ENCODE measurements at regions of chr13 and their contacts with region 1.

Region 1: DNA sequence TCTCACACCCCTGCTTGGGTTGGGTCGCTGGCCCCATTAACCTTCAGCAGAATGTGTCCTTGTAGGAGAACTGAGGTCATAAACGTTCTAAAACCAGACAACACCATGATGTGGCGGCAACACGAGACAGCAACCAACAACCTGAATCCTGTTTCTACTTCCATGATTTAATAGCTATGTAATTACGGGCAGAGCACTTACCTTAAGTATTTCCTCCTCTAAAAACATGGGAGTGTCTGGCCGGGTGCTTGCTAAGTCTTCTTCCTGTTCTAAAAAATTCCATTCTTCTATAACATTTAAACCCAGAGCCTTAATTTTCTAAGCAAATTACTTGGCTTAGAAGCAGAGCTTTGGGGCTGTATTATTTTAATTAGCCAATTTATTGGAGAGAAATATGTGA is 33.5 kb upstream of the IRS2 start:
- DNase-seq: no peak
- ATAC-seq: peak; percentile 27
- H3K4me3 ChIP-seq: no peak overlapping the region
- H3K4me1 ChIP-seq: no peaks in the 10 kb centered on the region
- CTCF ChIP-seq: no peak

Region 2: DNA sequence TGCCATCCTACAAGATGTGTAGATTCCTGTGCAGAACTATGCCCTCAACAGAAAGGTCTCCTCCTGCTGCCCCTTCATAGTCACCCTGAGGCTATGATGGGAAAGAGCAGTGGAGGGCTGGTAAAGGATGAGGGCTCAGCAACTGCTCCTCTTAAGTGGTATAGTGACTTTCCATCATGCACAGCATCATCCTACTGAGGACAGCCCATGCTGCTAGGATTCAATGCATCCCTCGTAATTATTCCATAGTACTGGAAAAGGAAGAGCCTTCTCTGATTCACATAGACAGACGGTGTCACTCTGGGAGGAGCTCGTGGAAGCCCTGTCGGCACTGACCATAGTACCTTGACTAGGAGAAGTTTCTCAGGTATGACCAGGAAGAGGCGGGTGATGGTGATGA is 14.1 kb after region 1 on chr13:
- intact Hi-C with region 1: loop called in 1 of 2 experiments (anchors 1 kb)
- DNase-seq: no peak
- ATAC-seq: no peak
- H3K4me3 ChIP-seq: no peak overlapping the region
- H3K4me1 ChIP-seq: no peaks in the 10 kb centered on the region
- CTCF ChIP-seq: no peak